ENCODE measurements at regions of chr6 and their contacts with region 1.

Region 1: DNA sequence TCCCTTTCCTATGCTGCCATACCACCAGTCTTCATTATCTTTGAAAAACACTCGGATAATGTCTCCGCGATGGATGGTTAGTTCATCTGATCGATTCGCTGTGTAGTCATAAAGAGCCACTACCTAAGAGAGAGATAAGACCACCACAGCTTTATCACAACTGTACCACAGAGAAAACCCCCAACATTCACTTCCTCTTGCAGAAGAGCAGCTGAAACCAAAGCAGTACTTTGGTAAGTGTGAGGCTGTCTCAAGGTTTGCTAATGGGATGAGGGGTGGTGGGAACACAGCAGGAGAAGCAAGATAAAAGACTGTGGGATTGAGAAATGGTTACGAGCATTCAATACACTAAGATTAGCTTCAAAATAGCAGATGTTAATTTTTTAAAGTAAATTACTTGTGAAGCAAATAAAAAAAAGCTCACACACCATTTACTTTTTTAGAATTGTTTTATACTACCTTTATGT is 142.1 kb downstream of the MYB start:
- DNase-seq: no peak
- H3K4me3 Mint-ChIP-seq: no peak overlapping the region
- H3K27ac Mint-ChIP-seq: peak overlapping the region; percentile 61
- H3K4me1 Mint-ChIP-seq: peaks cover 37% of the 10 kb centered on the region
- H3K27me3 Mint-ChIP-seq: no peaks in the 10 kb centered on the region

Region 2: DNA sequence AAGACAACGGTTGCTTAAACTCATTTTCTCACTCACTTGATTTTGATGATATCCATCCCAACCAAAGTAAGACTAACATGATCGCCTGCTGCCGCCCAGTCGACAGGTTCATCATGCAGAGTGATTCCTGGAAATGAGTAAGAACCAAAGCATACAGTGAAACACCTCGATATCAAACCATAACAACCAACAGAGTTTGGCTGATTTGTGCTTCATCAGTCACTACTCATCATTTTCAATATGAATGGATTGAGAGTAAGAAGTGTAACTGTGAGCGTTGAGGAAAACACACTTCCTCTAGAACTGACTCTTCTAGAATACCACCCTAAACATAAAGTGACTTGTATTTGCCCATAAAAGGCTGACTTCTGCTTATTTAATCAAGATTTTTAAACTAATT is 344.1 kb before region 1 on chr6:
- intact Hi-C with region 1: loop called (anchors 1 kb)
- DNase-seq: peak; percentile 55
- H3K4me3 Mint-ChIP-seq: peak overlapping the region; percentile 57
- H3K27ac Mint-ChIP-seq: peak overlapping the region; percentile 78
- H3K4me1 Mint-ChIP-seq: peaks cover 52% of the 10 kb centered on the region
- H3K27me3 Mint-ChIP-seq: no peaks in the 10 kb centered on the region

Region 3: DNA sequence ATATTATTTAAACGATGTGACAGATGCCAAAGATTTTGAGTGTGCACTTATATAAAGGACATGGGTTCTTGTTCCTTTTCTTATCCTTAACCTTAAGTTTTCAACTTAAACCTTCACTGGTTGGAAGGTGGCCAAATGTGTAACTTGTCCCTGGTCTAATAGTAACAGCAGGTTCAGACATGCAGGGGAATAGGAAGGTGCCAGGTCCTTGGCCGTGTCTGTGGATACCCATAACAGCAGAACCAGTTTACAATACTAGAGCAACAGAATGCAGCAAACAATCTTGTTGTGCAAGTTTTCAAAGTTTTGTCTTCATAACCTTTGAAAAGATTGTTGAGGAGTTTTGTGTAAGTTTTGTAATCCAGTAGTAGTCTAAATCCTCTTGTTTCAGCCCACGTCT is 137.8 kb before region 1 on chr6:
- intact Hi-C with region 1: no loop called
- DNase-seq: no peak
- H3K4me3 Mint-ChIP-seq: peak overlapping the region; percentile 10
- H3K27ac Mint-ChIP-seq: peak overlapping the region; percentile 54
- H3K4me1 Mint-ChIP-seq: peaks cover 48% of the 10 kb centered on the region
- H3K27me3 Mint-ChIP-seq: no peaks in the 10 kb centered on the region

Region 4: GRCh38 chr6:135291288-135292116 is 31.7 kb before region 1 on chr6:
- intact Hi-C with region 1: loop called (anchors 1 kb)
- DNase-seq: no peak
- H3K4me3 Mint-ChIP-seq: no peak overlapping the region
- H3K27ac Mint-ChIP-seq: no peak overlapping the region
- H3K4me1 Mint-ChIP-seq: peaks cover 21% of the 10 kb centered on the region
- H3K27me3 Mint-ChIP-seq: no peaks in the 10 kb centered on the region

Region 5: DNA sequence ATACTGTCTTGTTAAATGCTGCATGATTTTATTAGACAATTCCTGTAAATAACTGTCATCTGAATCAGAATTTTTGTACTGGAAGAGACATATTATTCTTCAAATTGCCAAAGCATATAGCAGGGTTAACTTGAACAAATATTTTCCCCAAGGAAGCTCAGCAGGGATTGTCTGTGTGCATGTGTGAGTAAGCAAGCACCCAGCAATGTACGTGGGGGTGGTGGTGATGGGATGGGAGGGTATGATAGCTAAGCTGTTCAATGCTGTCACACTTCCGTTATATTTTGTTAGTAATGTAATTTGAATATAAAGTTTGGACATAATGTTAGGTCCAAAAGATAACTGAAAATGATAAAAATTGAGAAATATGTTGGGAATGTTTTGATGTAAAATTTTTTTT is 24.0 kb before region 1 on chr6:
- intact Hi-C with region 1: loop called (anchors 2 kb)
- DNase-seq: no peak
- H3K4me3 Mint-ChIP-seq: no peak overlapping the region
- H3K27ac Mint-ChIP-seq: peak overlapping the region; percentile 88
- H3K4me1 Mint-ChIP-seq: peaks cover 37% of the 10 kb centered on the region
- H3K27me3 Mint-ChIP-seq: no peaks in the 10 kb centered on the region